OCI-LY7 (cell line): ENCODE measurements at regions of chr1 and their contacts with region 1.

Region 1: GRCh38 chr1:45569962-45570581 is 13.8 kb upstream of the NASP start:
- DNase-seq: peak; percentile 77
- H3K4me3 ChIP-seq: no peak overlapping the region
- H3K27ac ChIP-seq: no peak overlapping the region
- H3K4me1 ChIP-seq: no peaks in the 10 kb centered on the region
- CTCF ChIP-seq: peak; percentile 99

Region 2: DNA sequence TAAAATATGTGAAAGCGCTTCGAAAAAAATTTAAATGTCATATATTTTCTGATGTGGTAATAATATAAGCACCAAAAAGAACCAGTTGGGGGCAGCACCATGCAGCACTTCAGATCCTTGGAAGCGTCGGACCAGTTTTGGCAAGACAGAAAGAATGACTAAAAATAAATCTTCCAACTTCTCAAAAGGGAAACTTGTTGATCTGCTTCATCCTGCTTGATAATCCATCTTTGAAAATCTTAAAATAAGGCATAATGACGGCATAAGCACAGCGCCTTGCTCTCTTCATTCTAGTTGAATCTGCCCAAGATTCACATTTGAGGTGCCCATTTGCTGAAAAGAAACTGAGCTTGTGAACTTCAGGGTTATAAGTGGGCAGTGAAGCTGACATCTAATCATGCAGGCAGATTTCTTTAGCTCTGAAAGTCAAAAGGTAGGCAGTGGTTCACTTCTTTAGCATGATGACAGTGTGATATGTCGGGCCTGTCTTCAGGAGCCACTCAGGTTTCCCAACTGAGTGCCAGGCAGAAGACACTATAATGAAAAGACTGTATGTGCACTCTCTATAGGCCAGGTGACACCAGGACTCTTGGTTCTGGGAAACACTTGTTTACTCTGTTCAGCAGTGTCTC is 210.1 kb before region 1 on chr1:
- CTCF ChIA-PET with region 1: no interaction called
- POLR2A ChIA-PET with region 1: interaction called, 3 read pairs
- intact Hi-C with region 1: loop called (anchors 1 kb)
- DNase-seq: peak; percentile 74
- H3K4me3 ChIP-seq: no peak overlapping the region
- H3K27ac ChIP-seq: no peak overlapping the region
- H3K4me1 ChIP-seq: peaks cover 15% of the 10 kb centered on the region
- CTCF ChIP-seq: peak; percentile 93

Region 3: GRCh38 chr1:45499415-45499769 is 70.7 kb before region 1 on chr1:
- CTCF ChIA-PET with region 1: interaction called, 12 read pairs
- POLR2A ChIA-PET with region 1: interaction called, 3 read pairs
- intact Hi-C with region 1: loop called (anchors 2 kb)
- DNase-seq: peak; percentile 59
- H3K4me3 ChIP-seq: peak overlapping the region; percentile 86
- H3K27ac ChIP-seq: peak overlapping the region; percentile 54
- H3K4me1 ChIP-seq: peaks cover 21% of the 10 kb centered on the region
- CTCF ChIP-seq: no peak

Region 4: DNA sequence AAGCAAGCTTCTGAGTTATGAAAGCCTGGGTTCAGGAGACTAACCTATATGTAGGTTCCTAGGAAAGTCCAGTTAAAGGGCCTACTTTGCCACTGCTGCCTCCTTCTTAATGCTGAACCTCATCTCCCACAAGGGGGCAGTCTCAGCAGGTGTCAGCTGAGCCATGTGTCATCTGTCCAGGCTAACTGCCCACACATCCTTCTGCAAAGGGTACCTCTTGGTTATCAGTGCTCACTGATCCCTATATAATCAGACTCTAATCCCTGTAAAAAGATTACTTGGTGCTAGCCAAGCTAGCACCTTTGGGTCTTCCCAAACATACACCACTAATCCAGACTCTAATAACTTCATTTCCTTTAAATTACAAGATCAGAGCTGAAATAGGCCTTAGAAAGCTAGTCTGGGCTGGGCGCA is 57.4 kb before region 1 on chr1:
- CTCF ChIA-PET with region 1: interaction called, 8 read pairs
- POLR2A ChIA-PET with region 1: interaction called, 3 read pairs
- intact Hi-C with region 1: loop called (anchors 1 kb)
- DNase-seq: peak; percentile 74
- H3K4me3 ChIP-seq: no peak overlapping the region
- H3K27ac ChIP-seq: no peak overlapping the region
- H3K4me1 ChIP-seq: peaks cover 19% of the 10 kb centered on the region
- CTCF ChIP-seq: peak; percentile 88

Region 5: GRCh38 chr1:45521398-45522323 is 48.4 kb before region 1 on chr1 and contains the start of gene PRDX1:
- CTCF ChIA-PET with region 1: interaction called, 4 read pairs
- POLR2A ChIA-PET with region 1: interaction called, 27 read pairs
- intact Hi-C with region 1: no loop called
- DNase-seq: peak; percentile 95
- H3K4me3 ChIP-seq: peak within 1 kb of the TSS; percentile 99
- H3K27ac ChIP-seq: peak within 1 kb of the TSS; percentile 90
- H3K4me1 ChIP-seq: peaks cover 43% of the 10 kb centered on the region
- CTCF ChIP-seq: peak; percentile 30; the same call in 1 of the 2 replicates
- total RNA-seq, gene PRDX1: 725 and 814 TPM in 2 replicates

Region 6: GRCh38 chr1:45530632-45531135 is 39.4 kb before region 1 on chr1:
- CTCF ChIA-PET with region 1: interaction called, 10 read pairs
- POLR2A ChIA-PET with region 1: interaction called, 6 read pairs
- intact Hi-C with region 1: no loop called
- DNase-seq: no peak
- H3K4me3 ChIP-seq: no peak overlapping the region
- H3K27ac ChIP-seq: no peak overlapping the region
- H3K4me1 ChIP-seq: no peaks in the 10 kb centered on the region
- CTCF ChIP-seq: no peak

Region 7: DNA sequence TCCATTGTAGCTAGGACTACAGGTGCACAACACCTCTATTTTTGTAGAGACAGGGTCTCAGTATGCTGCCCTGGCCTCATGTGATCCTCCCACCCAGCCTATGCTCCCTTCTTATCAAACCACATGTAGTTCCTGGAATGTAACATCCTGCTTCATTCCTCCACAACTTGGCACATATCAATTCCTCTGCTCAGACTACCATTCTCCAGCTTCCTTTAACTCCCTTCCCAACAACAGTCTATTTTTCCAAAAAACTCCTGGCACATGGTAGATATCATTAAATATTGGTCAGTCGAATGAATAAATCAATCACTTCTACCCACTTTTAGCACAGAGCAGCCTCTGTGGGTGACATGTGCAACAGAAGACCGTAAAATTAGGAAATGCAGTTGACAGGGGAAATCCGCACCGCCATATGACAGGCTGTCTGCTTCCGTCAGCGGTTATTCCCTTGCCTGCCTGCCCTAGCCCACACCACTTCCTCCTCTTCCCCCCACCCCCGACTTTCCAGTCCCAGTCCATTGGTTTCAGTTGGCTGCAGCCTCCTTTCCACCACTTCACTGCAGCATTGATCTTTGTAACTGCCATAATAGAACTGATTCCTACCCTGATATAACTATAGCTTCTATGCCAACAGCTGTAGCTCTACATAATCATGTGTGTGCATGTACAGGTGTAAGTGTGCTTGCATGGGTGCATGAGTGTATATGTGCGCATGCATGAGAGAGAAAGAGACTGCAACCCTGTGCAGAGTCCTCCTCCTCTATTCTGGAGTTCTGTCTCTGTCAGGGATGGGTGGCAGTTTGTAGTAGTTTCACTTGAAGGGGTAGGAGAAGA is 26.3 kb before region 1 on chr1:
- CTCF ChIA-PET with region 1: no interaction called
- POLR2A ChIA-PET with region 1: no interaction called
- intact Hi-C with region 1: no loop called
- DNase-seq: peak; percentile 46
- H3K4me3 ChIP-seq: peak overlapping the region; percentile 12
- H3K27ac ChIP-seq: peak overlapping the region; percentile 51
- H3K4me1 ChIP-seq: peaks cover 25% of the 10 kb centered on the region
- CTCF ChIP-seq: no peak

Region 8: DNA sequence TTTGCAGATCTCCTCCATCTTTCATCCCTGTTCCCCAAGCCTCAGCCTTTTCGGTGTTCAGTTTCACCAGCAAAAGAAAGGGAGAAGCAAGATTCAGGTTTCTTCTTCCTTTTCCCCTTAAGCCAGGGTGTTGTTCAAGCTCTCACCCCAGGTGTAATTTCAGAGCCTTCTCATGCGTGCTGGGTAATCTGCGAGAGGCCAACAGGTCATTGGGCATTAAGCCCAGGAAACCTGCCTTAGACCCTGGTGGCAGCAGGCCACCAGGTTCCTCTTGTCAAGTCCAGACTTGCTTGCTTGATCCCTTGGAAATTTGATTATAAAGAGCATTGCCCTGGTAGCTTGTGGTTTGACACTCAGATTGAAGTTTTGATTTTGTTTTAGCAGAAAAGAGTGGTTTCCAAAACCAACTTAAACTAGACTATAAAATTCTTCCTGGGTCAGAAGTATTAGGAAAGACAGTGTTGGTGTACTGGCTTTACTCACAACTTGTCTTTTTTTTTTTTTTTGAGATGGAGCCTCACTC is 12.6 kb before region 1 on chr1:
- CTCF ChIA-PET with region 1: interaction called, 3 read pairs
- POLR2A ChIA-PET with region 1: interaction called, 10 read pairs
- intact Hi-C with region 1: no loop called
- DNase-seq: no peak
- H3K4me3 ChIP-seq: no peak overlapping the region
- H3K27ac ChIP-seq: no peak overlapping the region
- H3K4me1 ChIP-seq: peaks cover 2% of the 10 kb centered on the region
- CTCF ChIP-seq: no peak